Activated naive CD8-positive, alpha-beta T cell treated with anti-CD3 and anti-CD28 coated beads, Interleukin-2, amount 10 ng/mL, durations not matched to agents 7 days and 5 days (primary cell): ENCODE measurements at regions of chr15 and their contacts with region 1.

Region 1: GRCh38 chr15:51737280-51738017 is at the start of gene LYSMD2:
- DNase-seq: peak; percentile 81
- ATAC-seq: peak; percentile 67
- H3K4me3 Mint-ChIP-seq: peak within 1 kb of the TSS; percentile 86
- H3K27ac Mint-ChIP-seq: peak within 1 kb of the TSS; percentile 90
- H3K4me1 Mint-ChIP-seq: peaks cover 39% of the 10 kb centered on the region
- H3K27me3 Mint-ChIP-seq: no peaks in the 10 kb centered on the region
- total RNA-seq, gene LYSMD2: 24.1 to 27.3 TPM

Region 2: GRCh38 chr15:51622604-51623370 is 114.7 kb before region 1 on chr15 and contains the start of gene DMXL2:
- POLR2A ChIA-PET with region 1: interaction called, 10 read pairs
- DNase-seq: peak; percentile 85
- ATAC-seq: peak; percentile 69
- H3K4me3 Mint-ChIP-seq: peak within 1 kb of the TSS; percentile 90
- H3K27ac Mint-ChIP-seq: peak within 1 kb of the TSS; percentile 73
- H3K4me1 Mint-ChIP-seq: peaks cover 14% of the 10 kb centered on the region
- H3K27me3 Mint-ChIP-seq: peaks cover 11% of the 10 kb centered on the region
- total RNA-seq, gene DMXL2: 8.7 to 11.8 TPM

Region 3: GRCh38 chr15:51688863-51689262 is 48.6 kb before region 1 on chr15:
- POLR2A ChIA-PET with region 1: no interaction called
- DNase-seq: no peak
- ATAC-seq: no peak
- H3K4me3 Mint-ChIP-seq: no peak overlapping the region
- H3K27ac Mint-ChIP-seq: no peak overlapping the region
- H3K4me1 Mint-ChIP-seq: peaks cover 14% of the 10 kb centered on the region
- H3K27me3 Mint-ChIP-seq: peaks cover 44% of the 10 kb centered on the region

Region 4: DNA sequence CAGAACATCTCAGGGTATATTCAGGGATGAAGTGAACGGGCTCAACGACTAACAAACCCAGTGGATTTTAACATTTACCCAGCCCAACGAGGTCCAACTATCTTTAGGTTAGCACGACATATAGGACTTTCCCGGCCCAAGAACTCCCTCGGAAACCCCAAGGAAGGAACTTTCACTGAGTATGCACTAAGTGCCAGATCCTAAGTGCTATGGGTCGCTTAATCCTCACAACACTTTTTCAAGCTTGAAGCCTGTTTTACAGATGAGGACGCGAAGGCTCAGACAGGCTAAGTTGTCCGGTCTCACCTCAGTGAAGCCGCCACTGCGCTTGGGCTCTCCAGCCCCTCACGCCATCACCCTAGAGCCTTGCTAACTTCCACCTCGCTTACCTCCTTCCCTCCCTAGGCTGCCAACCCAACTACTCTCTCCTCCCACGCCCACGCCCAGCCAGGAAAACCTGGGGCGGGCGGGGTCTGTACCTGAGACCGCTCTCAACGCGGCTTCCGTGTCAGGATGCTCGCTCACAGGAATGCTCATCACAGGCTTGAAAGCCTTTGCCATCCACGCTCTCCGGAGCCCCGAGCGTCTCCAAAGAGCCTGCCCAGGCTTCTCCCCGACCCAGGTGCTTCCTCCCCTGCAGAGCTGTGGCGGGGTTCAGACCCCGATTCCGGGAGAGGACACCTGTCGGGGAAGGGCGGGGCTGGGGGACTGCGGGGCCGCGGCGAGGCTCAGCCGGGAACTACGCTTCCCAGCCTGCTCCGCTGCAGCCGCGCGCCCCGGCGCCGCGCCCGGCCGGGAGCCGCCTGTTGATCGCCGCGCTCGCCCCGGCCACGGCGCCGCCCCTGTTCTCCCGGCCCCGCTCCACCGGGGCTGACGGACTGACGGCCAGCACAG is 13.6 kb after region 1 on chr15 and contains the start of gene TMOD2:
- POLR2A ChIA-PET with region 1: interaction called, 21 read pairs
- DNase-seq: peak; percentile 78
- ATAC-seq: peak; percentile 92
- H3K4me3 Mint-ChIP-seq: peak within 1 kb of the TSS; percentile 91
- H3K27ac Mint-ChIP-seq: peak within 1 kb of the TSS; percentile 51
- H3K4me1 Mint-ChIP-seq: peaks cover 38% of the 10 kb centered on the region
- H3K27me3 Mint-ChIP-seq: peaks cover 8% of the 10 kb centered on the region
- total RNA-seq, gene TMOD2: 14.7 to 16.0 TPM

Region 5: DNA sequence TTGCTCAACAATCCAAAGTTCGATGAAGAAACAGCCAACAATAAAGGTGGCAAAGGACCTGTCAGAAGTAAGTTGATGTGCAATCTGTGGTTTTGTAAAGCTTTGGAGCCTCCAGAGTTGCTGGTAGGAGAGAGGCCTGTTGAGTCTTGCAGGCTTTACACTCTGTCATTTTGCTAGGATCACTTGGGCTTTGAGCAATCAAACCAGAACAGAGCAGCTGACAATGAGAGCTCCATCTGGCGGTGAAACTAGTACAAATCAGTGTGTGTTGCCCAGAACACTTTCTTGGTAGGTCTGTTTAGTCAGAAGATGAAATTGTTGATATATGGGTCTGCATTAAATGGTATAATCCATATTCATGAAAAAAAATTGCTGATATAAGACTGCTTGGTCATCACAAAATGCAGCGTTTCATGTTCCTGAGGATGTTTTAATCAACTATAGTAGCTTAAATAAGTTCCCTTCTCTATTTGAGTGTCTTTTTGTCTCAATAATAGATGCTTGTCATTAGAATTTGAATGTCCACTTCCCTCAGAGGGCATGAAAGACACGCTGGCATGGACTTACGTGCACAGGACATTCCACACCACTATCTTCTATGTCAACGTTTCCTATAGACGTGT is 39.6 kb after region 1 on chr15:
- POLR2A ChIA-PET with region 1: interaction called, 10 read pairs
- DNase-seq: no peak
- ATAC-seq: peak; percentile 70
- H3K4me3 Mint-ChIP-seq: no peak overlapping the region
- H3K27ac Mint-ChIP-seq: no peak overlapping the region
- H3K4me1 Mint-ChIP-seq: peaks cover 6% of the 10 kb centered on the region
- H3K27me3 Mint-ChIP-seq: no peaks in the 10 kb centered on the region